Ascending aorta (tissue), 2 donors: ENCODE measurements at regions of chr9 and their contacts with region 1.

Region 1: GRCh38 chr9:97921959-97922724 is at the start of gene TRMO:
- DNase-seq: peak; percentile 93 to 99
- H3K4me3 ChIP-seq: peak within 1 kb of the TSS; percentile 58 to 64
- H3K27ac ChIP-seq: peak within 1 kb of the TSS; percentile 92 to 94
- H3K4me1 ChIP-seq: peaks cover 3 to 19% of the 10 kb centered on the region in 2 donors
- H3K27me3 ChIP-seq: no peaks in the 10 kb centered on the region
- CTCF ChIP-seq: peak; percentile 29 to 62 (median 30)
- total RNA-seq, gene TRMO: 24.8 TPM

Region 2: DNA sequence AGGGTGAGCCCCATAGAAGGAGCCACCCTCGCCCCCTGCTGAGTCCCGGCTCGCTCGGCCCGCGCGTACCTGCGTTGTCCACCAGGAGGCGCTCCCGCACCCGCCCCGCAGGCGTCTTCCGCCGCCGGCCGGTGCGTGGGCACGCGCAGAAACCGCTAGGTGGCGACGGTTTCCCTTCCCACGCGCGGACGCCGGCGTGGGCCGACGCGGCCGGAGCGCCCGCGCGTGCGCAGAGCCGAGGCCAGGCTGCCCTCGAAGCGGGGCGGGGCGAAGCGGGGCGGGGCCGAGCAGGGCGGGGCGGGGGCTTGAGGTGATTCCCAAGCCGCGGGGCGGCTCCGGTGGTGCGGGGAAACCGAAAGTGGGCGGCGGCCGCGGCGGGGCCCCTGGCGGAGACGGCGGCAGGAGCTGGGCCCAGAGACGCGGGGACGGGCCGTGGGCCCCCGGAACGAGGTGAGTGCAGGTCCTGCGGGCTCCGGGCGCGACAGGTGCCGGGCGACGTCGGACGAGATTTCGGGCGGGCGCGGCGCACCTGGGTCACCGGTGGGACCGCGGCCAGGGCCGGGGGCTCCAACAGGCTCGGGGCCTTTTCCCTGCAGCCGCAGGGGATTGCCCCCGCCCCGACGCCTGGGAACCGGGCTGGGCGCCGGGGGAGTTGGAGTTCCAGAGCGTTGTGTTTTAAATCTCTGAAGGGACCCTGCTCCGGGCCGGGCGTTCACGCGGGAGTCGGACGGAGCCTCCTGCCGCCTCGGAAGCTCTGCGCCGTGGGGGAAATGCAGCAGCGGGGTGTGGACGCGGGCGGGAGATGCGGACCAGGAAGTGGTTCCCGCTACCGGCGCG is 510.1 kb before region 1 on chr9 and contains the start of gene TDRD7:
- intact Hi-C with region 1: loop called (anchors 5 kb)
- DNase-seq: peak; percentile 36 to 92
- H3K4me3 ChIP-seq: peak within 1 kb of the TSS; percentile 85 to 97
- H3K27ac ChIP-seq: peak within 1 kb of the TSS; percentile 82
- H3K4me1 ChIP-seq: peaks cover 0 to 8% of the 10 kb centered on the region in 2 donors
- H3K27me3 ChIP-seq: no peaks in the 10 kb centered on the region
- CTCF ChIP-seq: peak; percentile 96 to 99 (median 99)
- total RNA-seq, gene TDRD7: 3.0 TPM

Region 3: GRCh38 chr9:97689401-97689800 is 232.7 kb before region 1 on chr9:
- intact Hi-C with region 1: no loop called
- DNase-seq: no peak
- H3K4me3 ChIP-seq: no peak overlapping the region
- H3K27ac ChIP-seq: peak overlapping the region in 1 of 2 donors; percentile 32
- H3K4me1 ChIP-seq: peaks cover 0 to 14% of the 10 kb centered on the region in 2 donors
- H3K27me3 ChIP-seq: no peaks in the 10 kb centered on the region
- CTCF ChIP-seq: no peak

Region 4: DNA sequence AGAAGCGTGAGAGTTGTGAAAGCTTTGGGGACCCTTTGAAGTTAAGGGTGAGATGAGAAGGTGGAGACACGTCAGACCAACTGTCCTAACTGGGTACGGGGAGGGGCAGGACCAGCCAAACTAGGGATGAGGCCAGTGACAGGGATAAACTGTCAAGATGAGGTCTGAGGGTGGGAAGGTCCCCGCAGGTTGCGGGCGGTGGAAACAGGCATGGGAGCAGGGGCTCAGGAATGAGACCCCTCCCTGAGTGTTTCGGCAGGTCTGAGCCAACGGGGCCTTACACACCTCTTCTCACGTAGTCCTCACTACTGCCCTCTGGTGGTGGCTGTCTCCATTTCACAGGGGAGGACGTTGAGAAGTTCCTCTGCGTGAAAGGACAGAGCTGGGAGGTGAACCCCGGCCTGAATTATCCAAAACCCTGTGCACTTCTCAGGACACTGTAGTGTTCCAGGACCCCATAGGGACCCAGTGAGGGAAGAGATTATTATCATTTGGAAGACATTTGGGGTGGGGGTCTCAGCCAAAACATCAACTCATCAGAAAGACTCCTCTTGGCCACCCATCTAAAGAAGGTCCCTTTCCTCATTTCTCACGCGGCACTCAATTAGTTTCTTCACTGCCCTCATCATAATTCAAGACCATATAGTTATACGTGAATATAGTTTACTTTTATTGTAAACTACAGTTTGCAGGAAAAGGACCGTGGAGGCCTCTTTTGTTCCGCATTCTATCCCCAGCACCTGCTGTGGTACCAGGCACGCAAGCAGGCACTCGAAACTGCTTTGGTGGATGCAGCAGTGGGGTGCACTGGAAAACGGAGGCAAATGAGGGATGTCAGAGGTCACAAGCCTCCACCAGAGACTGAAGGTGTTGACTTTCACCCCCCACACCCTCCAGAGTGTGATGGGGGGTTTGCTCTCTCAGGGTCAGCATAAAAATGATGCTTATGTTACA is 112.7 kb after region 1 on chr9:
- intact Hi-C with region 1: loop called (anchors 1 kb)
- DNase-seq: peak; percentile 44 to 93
- H3K4me3 ChIP-seq: peak overlapping the region in 1 of 2 donors; percentile 30
- H3K27ac ChIP-seq: peak overlapping the region; percentile 52 to 74
- H3K4me1 ChIP-seq: peaks cover 0 to 10% of the 10 kb centered on the region in 2 donors
- H3K27me3 ChIP-seq: no peaks in the 10 kb centered on the region
- CTCF ChIP-seq: peak; percentile 72 to 83 (median 81)

Region 5: DNA sequence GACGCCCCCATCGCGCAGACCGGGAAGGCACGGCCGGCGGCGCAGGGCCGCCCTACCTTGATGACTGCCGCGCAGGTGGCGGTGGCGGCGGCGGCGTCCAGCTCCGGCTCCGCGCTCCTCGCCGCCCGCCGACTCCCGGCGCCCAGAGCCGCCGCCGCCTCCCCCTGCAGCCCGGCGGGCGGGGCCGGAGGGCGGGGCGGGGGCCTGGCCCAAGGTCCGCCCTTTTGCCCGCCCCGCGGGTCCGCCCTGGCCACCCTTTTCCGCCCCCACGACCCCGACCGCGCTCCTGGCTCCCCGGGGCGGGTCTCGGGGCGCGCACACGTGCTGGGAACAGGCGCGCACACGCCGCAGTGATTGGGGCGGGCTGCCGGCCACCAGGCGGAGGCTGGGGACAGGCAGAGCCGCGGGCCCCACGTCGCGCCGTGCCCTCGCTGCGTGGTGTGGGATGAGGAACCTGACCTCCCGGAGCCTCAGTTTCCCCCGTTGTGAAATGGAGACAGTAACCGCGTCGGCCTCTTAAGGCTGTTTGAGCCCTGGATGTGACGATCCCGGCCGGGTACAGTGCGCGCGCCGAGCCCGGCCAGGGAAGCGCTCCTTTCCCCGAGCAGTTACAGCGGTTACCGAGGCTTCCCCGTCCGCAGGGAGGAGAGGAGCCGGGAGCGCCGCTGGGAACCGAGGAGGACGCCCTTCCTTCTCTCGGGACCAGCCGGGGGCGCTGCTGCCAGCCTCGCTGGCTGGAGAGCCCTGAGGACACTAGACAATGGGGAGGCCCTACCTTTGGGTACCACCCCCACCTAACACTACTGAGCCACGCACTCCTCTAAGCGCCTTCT is 270.6 kb after region 1 on chr9 and contains the start of gene CORO2A:
- intact Hi-C with region 1: loop called (anchors 2 kb)
- DNase-seq: peak in 1 of 2 donors; percentile 83
- H3K4me3 ChIP-seq: peak within 1 kb of the TSS; percentile 73 to 83
- H3K27ac ChIP-seq: peak within 1 kb of the TSS; percentile 18 to 61
- H3K4me1 ChIP-seq: no peaks in the 10 kb centered on the region
- H3K27me3 ChIP-seq: no peaks in the 10 kb centered on the region
- CTCF ChIP-seq: peak in 2 of 3 experiments; percentile 10 to 49
- total RNA-seq, gene CORO2A: 9.0 TPM

Region 6: DNA sequence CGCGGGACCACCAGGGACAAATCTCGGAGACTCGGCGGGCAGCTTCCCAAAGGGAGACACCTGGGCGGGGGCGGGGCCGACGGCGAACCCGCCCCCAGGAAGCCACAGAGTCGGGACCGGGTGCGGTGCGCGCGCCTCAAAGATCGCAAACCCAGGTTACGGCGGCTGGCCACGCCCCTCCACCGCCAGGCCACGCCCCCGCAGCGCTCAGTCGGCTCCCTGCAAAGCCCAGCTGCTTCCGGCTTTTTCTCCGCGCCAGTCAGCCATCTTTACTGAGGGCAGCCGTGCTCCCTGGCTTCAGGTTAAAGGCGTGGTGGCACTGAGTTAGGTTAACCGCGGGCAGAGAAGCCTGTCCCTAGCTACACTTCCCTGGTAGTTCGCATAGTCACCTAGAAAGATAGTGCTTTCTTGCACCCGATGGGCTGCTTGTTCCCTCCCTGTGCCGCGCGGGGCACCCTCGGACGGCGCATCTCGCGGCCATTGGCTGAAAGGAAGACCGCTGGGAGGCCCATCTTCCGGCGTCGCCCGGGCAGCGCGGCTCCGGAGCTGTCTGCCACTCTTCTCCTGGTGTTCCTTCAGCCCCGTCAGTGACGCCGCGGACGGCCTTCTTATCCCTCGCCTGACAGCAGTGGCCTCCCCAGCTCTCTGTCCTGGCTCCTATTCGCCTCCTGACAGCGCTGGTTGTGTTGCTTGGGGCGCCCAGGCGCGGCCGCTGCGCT is 333.6 kb after region 1 on chr9 and contains the start of gene TBC1D2:
- intact Hi-C with region 1: loop called (anchors 2 kb)
- DNase-seq: peak; percentile 81 to 97
- H3K4me3 ChIP-seq: peak within 1 kb of the TSS; percentile 71 to 72
- H3K27ac ChIP-seq: peak within 1 kb of the TSS; percentile 91 to 95
- H3K4me1 ChIP-seq: peaks cover 0 to 15% of the 10 kb centered on the region in 2 donors
- H3K27me3 ChIP-seq: no peaks in the 10 kb centered on the region
- CTCF ChIP-seq: peak in 1 of 3 experiments; percentile 10
- total RNA-seq, gene TBC1D2: 32.5 TPM

Region 7: GRCh38 chr9:98755006-98755575 is 832.9 kb after region 1 on chr9:
- intact Hi-C with region 1: no loop called
- DNase-seq: no peak
- H3K4me3 ChIP-seq: no peak overlapping the region
- H3K27ac ChIP-seq: no peak overlapping the region
- H3K4me1 ChIP-seq: no peaks in the 10 kb centered on the region
- H3K27me3 ChIP-seq: no peaks in the 10 kb centered on the region
- CTCF ChIP-seq: no peak

Region 8: GRCh38 chr9:98791147-98792095 is 869.3 kb after region 1 on chr9:
- intact Hi-C with region 1: loop called (anchors 2 kb)
- DNase-seq: peak; percentile 63 to 95
- H3K4me3 ChIP-seq: no peak overlapping the region
- H3K27ac ChIP-seq: peak overlapping the region; percentile 52 to 55
- H3K4me1 ChIP-seq: peaks cover 0 to 18% of the 10 kb centered on the region in 2 donors
- H3K27me3 ChIP-seq: no peaks in the 10 kb centered on the region
- CTCF ChIP-seq: peak; percentile 98 to 99 (median 99)